ENCODE measurements at regions of chr14 and their contacts with region 1.

Region 1: GRCh38 chr14:76012354-76012753 is 26.8 kb downstream of the IFT43 start:
- DNase-seq: no peak
- H3K4me3 ChIP-seq: no peak overlapping the region
- H3K27ac ChIP-seq: peak overlapping the region in 1 of 2 donors; percentile 48
- H3K4me1 ChIP-seq: no peaks in the 10 kb centered on the region
- H3K27me3 ChIP-seq: no peaks in the 10 kb centered on the region
- CTCF ChIP-seq: no peak
- POLR2A ChIP-seq: no peak

Region 2: DNA sequence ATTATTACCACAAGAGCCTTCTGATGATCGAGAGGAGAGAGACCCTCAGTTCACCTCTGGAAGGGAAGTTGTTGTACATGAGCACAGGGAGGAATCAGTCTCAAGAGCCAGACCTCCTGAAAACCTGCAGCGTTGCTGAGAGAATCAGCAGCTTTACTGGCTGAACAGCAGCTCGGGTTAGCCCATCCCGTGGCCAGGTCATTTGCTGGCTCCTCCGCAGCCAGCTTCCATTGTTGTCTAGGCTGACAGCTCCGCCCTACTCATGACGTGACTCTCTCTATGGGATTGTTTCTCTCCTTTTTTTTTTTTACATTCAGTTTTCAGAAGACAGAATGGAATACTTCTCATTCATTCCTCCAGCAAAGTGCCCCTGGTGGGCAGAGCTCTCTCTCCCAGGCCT is 100.5 kb before region 1 on chr14:
- intact Hi-C with region 1: no loop called
- DNase-seq: no peak
- H3K4me3 ChIP-seq: no peak overlapping the region
- H3K27ac ChIP-seq: no peak overlapping the region
- H3K4me1 ChIP-seq: no peaks in the 10 kb centered on the region
- H3K27me3 ChIP-seq: no peaks in the 10 kb centered on the region
- CTCF ChIP-seq: no peak
- POLR2A ChIP-seq: no peak

Region 3: DNA sequence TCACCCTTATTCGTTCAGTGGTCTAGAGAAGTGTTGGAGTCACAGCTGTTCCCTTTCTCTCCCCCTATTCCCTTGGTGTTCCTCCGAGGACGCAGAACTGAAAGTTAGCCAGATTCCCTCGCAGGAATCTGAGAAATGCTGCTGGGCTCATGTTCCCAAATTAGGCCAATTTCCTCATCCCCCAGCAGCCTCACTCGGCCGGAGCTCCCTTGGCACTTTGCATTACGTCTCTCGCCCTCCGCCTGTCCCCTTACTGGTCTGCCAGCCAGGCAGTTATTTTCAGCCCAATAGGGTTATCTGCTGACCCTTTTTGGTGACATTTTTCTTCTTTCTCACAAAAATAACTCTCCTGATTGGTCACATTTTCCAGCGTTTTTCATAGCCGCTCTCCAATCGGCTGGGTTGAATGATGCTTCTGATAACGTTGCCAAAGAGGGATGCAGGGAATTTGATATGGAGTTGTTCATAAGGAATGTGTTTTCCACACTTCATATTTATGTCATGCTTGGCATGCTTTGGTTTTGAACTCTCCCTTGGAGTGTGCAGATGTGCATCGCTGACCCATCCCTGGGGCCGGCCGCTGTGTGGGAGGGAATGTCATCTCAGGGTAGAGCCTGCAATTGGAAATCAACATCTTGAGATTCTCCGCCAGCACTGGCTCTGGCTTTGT is 16.8 kb before region 1 on chr14:
- intact Hi-C with region 1: loop called (anchors 2 kb)
- DNase-seq: no peak
- H3K4me3 ChIP-seq: no peak overlapping the region
- H3K27ac ChIP-seq: peak overlapping the region; percentile 15 to 52
- H3K4me1 ChIP-seq: no peaks in the 10 kb centered on the region
- H3K27me3 ChIP-seq: no peaks in the 10 kb centered on the region
- CTCF ChIP-seq: no peak
- POLR2A ChIP-seq: no peak

Region 4: GRCh38 chr14:76208340-76208739 is 196.0 kb after region 1 on chr14:
- intact Hi-C with region 1: no loop called
- DNase-seq: no peak
- H3K4me3 ChIP-seq: no peak overlapping the region
- H3K27ac ChIP-seq: no peak overlapping the region
- H3K4me1 ChIP-seq: no peaks in the 10 kb centered on the region
- H3K27me3 ChIP-seq: no peaks in the 10 kb centered on the region
- CTCF ChIP-seq: no peak
- POLR2A ChIP-seq: no peak